ENCODE measurements at regions of chr10 and their contacts with region 1.

Region 1: GRCh38 chr10:26890956-26891355 is 30.2 kb upstream of the ABI1 start:
- DNase-seq: peak in 4 of 10 donors; percentile 39 to 66 (median 51)
- H3K4me3 ChIP-seq: no peak overlapping the region
- H3K27ac ChIP-seq: no peak overlapping the region
- H3K27me3 ChIP-seq: peaks cover 0 to 5% (median 0%) of the 10 kb centered on the region in 45 donors
- CTCF ChIP-seq: peak in 55 of 56 donors; percentile 25 to 59 (median 47)

Region 2: DNA sequence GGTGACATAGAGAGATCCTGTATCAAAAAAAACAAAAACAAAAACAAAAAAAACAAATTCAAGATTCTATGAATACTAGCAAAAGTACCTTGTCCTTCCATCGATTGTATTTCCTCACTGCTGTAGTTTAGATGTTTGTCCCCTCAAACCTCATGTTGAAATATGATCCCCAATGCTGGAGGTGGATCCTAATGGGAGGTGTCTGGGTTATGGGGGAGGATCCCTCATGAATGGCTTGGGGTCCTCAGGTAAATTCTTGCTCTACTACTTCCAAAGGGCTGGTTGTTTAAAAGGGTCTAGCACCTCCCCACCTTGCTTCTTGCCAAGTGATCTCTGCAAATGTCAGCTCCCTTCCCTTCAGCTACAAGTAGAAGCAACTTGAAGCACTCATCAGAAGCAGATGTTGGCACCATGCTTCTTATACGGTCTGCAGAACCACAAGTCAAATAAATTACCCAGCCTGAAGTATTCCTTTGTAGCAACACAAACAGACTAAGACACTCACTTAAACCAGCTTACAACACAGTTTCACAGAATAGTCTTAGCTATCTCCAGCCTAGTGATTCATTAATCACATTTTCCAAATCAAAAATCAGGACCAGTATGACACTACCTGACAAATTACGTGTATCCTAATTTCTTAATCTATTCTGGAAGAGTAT is 50.9 kb before region 1 on chr10:
- intact Hi-C with region 1: no loop called
- DNase-seq: no peak
- H3K4me3 ChIP-seq: no peak overlapping the region
- H3K27ac ChIP-seq: no peak overlapping the region
- H3K27me3 ChIP-seq: no peaks in the 10 kb centered on the region
- CTCF ChIP-seq: no peak

Region 3: DNA sequence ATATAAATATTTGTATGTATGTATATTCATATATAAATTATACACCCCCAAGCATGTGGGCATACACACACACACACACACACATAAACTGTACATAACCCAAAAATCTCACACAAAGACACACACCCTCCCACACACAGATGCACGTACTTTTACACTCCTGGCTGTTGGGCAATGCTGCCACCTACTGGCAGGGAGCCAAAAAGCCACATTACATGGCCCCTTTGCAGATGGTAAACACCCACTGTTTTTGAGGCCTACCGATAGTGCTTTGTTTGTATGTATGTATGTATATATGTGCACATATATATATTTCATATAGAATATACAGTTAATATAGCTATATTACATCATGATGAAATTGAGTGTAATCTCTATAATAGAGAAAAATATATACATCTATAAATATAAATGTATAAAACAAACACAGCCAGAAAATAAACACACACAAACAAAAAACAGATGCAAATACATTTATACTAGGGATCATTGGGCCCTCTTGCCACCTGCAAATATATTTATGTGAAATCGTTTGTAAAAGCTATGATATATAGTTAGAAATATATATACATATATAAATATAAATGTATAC is 469.7 kb after region 1 on chr10:
- intact Hi-C with region 1: loop called (anchors 2 to 5 kb)
- DNase-seq: peak; percentile 48 to 88 (median 76)
- H3K4me3 ChIP-seq: no peak overlapping the region
- H3K27ac ChIP-seq: no peak overlapping the region
- H3K27me3 ChIP-seq: no peaks in the 10 kb centered on the region
- CTCF ChIP-seq: peak; percentile 43 to 78 (median 64)